Left cardiac atrium (tissue), 4 donors: ENCODE measurements at regions of chr9 and their contacts with region 1.

Region 1: DNA sequence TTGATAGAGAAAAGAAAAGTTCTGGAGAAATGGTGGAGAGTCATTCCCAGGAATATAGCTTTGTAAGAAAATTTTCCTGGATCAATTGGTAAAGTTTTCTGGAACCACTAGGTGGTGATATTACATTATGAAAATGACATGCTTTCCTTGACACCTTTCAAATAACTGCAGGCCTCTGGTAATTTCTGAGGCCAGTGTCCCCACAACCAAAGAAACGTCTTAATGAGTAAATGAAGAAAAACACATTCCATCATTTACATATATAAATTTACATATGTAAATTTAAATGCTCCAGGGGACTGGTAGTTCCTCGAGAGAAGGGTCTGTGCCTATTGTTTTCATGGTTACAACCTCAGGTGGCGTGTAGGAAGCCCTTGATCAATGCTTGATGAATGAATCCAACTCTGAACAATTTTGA is 17.2 kb upstream of the RGS3 start:
- DNase-seq: no peak
- ATAC-seq: peak; percentile 62 to 65

Region 2: GRCh38 chr9:113501129-113501686 is 54.9 kb after region 1 on chr9:
- intact Hi-C with region 1: loop called in 1 of 2 experiments (anchors 5 kb)
- DNase-seq: peak; percentile 77
- ATAC-seq: peak; percentile 71 to 79

Region 3: DNA sequence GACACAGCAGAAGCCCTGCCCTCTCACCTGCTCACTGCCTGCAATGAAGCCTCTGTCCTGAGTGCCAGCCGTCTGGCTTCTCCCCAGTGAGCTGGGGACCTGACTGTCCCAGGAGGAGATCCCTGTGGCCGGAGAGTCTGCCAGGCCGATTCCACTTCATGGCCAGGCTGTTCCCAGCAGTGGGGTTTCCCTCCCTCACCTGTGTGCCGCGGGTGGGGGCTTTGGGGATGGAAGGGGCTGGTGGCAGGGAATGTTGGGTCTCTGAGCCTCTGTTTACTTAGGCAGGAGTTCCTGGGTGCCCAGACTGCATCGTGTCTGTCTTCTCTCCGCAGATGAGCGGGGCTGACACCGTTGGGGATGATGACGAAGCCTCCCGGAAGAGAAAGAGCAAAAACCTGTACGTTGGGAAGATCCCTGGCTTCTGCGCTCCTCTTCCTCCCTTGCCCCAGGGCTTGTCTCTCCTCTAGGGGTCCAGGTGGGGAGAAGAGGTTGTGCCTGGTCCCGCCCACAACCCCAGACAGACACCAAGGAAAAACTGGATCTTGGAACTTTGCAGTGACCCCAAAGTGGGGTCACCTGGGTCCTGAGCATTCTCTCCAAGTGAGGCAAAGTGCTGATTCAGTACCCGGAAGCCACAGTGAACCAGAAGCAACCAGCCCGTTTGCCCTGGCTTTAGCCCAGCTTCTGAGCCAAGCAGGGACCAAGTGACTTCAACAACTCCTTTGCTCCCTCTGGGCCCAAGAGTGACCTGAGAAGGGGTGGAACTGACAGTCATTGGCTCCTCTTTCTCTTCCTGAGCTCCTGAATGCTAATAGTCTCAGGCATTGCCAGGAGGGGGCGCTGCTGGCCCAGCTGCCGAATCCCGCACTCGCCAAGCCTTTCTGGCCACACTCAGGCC is 144.9 kb after region 1 on chr9:
- intact Hi-C with region 1: loop called (anchors 1 to 5 kb)
- DNase-seq: peak; percentile 85
- ATAC-seq: peak; percentile 8 to 10

Region 4: GRCh38 chr9:113657703-113658544 is 211.6 kb after region 1 on chr9:
- intact Hi-C with region 1: loop called (anchors 2 to 5 kb)
- DNase-seq: peak; percentile 88
- ATAC-seq: peak; percentile 69 to 73